ENCODE measurements at regions of chr7 and their contacts with region 1.

Region 1: DNA sequence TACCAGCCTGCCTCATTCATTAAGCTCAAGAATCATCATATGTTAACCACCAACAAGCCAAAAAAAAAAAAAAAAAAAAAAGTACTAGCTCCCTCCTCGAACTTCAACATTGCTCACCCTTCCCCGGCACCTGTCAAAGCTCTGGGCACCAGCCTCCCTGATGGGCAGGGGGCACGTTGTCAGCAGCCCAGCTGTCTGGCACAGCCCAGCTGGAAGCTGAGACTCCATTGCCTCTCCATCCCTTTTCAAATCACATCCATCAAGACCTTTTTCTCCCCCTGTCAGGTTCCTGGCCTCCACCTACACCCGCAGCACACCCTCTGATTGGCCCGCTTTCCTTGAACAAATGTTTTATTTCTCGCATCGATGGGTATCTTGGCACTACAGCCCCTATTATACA is 913.3 kb upstream of the AUTS2 start:
- DNase-seq: no peak
- H3K4me3 ChIP-seq: no peak overlapping the region
- H3K27ac ChIP-seq: no peak overlapping the region
- H3K4me1 ChIP-seq: peaks cover 25% of the 10 kb centered on the region
- H3K27me3 ChIP-seq: no peaks in the 10 kb centered on the region
- CTCF ChIP-seq: no peak

Region 2: DNA sequence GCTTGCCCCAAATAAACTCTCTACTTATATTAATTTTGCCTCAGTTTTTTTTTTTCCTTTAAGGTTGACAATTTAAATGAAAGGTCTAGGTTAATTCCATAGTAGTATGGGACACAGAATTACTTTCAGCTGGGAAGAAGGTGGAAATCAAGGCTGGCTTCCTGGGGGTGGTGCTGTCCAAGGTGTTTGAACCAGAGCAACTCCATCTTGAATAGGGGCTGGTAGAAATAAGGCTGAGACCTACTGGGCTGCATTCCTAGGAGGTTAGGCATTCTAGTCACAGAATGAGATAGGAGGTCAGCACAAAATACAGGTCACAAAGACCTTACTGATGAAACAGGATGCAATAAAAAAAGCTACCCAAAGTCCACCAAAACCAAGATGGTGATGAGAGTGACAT is 277.5 kb before region 1 on chr7:
- CTCF ChIA-PET with region 1: no interaction called
- POLR2A ChIA-PET with region 1: no interaction called
- intact Hi-C with region 1: no loop called
- DNase-seq: no peak
- H3K4me3 ChIP-seq: no peak overlapping the region
- H3K27ac ChIP-seq: no peak overlapping the region
- H3K4me1 ChIP-seq: 0 out of 2 replicates have a peak, but pooled peaks cover 13% of the 10 kb centered on the region
- H3K27me3 ChIP-seq: no peaks in the 10 kb centered on the region
- CTCF ChIP-seq: no peak

Region 3: DNA sequence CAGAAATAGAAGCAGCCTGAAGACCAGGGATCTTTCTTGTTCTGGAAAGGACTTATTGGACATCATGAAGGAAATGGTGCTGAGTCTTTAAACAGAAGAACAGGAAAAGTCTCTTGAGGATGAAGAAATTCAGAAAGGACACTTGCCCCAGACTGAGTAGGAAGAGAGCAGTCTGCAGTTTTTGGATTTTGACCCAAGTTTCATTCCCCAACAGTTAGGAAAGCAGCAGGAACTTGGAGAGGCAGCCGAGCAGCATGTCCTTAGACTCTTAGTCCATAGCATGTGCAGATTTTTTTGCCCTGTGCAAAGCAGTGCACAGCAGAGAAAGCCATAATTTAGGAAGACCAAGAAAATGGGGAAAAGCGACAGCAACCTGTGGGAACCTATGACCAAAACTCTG is 13.9 kb before region 1 on chr7:
- CTCF ChIA-PET with region 1: interaction called, 16 read pairs
- POLR2A ChIA-PET with region 1: no interaction called
- intact Hi-C with region 1: no loop called
- DNase-seq: no peak
- H3K4me3 ChIP-seq: no peak overlapping the region
- H3K27ac ChIP-seq: no peak overlapping the region
- H3K4me1 ChIP-seq: no peaks in the 10 kb centered on the region
- H3K27me3 ChIP-seq: no peaks in the 10 kb centered on the region
- CTCF ChIP-seq: no peak

Region 4: DNA sequence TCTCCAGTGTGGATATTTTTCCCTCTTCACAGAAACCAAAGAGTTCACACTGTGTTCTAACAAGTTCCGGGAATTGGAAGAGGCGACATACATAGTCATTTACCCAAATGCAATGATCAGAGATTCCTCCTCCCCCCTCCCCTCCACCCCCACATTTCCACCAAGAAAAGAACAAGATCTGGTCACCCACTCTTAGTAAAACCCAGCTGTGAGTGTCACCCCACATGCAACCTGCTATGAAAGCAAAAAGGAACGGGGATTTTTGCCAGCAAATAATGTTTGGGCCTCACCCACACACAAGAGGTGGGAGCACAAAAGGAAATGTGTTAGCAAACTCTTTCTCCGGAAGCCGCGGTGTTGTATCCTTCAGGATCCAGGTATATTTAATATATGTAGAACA is 168.3 kb after region 1 on chr7:
- CTCF ChIA-PET with region 1: no interaction called
- POLR2A ChIA-PET with region 1: no interaction called
- intact Hi-C with region 1: no loop called
- DNase-seq: no peak
- H3K4me3 ChIP-seq: no peak overlapping the region
- H3K27ac ChIP-seq: no peak overlapping the region
- H3K4me1 ChIP-seq: no peaks in the 10 kb centered on the region
- H3K27me3 ChIP-seq: no peaks in the 10 kb centered on the region
- CTCF ChIP-seq: no peak

Region 5: GRCh38 chr7:69318794-69319193 is 633.8 kb after region 1 on chr7:
- CTCF ChIA-PET with region 1: no interaction called
- POLR2A ChIA-PET with region 1: no interaction called
- intact Hi-C with region 1: no loop called
- DNase-seq: no peak
- H3K4me3 ChIP-seq: no peak overlapping the region
- H3K27ac ChIP-seq: no peak overlapping the region
- H3K4me1 ChIP-seq: no peaks in the 10 kb centered on the region
- H3K27me3 ChIP-seq: no peaks in the 10 kb centered on the region
- CTCF ChIP-seq: no peak